Activated CD8-positive, alpha-beta T cell treated with anti-CD3 and anti-CD28 coated beads for 36 hours (primary cell): ENCODE measurements at regions of chr9 and their contacts with region 1.

Region 1: GRCh38 chr9:97993000-97993399 is 9.9 kb downstream of the ANP32B start:
- DNase-seq: no peak
- ATAC-seq: peak; percentile 66
- H3K4me3 Mint-ChIP-seq: peak overlapping the region; percentile 11
- H3K27ac Mint-ChIP-seq: peak overlapping the region; percentile 80
- H3K4me1 Mint-ChIP-seq: peaks cover 84% of the 10 kb centered on the region
- H3K27me3 Mint-ChIP-seq: no peaks in the 10 kb centered on the region
- CTCF ChIP-seq: no peak

Region 2: DNA sequence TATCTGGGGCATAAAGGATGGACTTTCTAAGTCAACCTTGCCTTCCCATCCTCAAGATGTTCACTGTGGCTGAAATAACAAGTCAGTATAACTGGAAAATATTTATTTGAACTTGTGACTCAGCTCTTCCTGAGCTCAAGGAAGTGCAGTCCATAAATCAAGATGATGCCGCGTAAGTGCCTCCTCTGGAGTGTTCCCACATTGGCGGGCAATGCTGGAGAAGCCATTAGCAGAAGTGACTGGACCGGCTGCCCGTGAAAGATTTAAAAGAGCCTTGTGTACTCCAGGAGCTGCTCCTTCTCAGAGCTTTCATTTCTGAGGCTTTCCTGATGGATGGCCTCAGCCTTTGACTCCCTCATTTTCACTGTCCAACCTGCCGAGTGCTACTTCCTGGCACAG is 474.1 kb before region 1 on chr9:
- CTCF ChIA-PET with region 1: no interaction called
- POLR2A ChIA-PET with region 1: no interaction called
- intact Hi-C with region 1: no loop called
- DNase-seq: no peak
- ATAC-seq: no peak
- H3K4me3 Mint-ChIP-seq: no peak overlapping the region
- H3K27ac Mint-ChIP-seq: no peak overlapping the region
- H3K4me1 Mint-ChIP-seq: no peaks in the 10 kb centered on the region
- H3K27me3 Mint-ChIP-seq: peaks cover 27% of the 10 kb centered on the region
- CTCF ChIP-seq: no peak

Region 3: DNA sequence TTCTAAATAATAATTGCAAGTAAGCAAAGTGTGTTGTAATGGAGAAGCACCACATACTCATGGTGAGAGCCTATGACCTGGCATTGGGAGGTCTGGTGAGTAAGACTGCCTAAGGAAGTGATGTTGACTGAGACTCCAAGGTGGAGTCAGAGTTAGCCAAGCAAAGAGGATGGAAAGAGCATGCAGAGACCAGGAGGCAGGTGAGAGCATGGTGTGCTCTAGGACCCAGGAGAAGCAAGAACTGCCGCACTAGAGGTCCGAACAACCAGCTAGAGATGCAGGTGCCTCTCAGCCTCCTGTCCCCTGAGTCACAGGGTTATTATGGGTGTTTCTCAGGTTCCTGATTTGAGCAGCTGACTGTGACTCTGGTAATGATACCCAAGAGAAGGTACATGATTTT is 17.4 kb after region 1 on chr9:
- CTCF ChIA-PET with region 1: interaction called, 11 read pairs
- POLR2A ChIA-PET with region 1: interaction called, 201 read pairs
- intact Hi-C with region 1: no loop called
- DNase-seq: peak; percentile 36
- ATAC-seq: peak; percentile 78
- H3K4me3 Mint-ChIP-seq: no peak overlapping the region
- H3K27ac Mint-ChIP-seq: peak overlapping the region; percentile 37
- H3K4me1 Mint-ChIP-seq: peaks cover 25% of the 10 kb centered on the region
- H3K27me3 Mint-ChIP-seq: no peaks in the 10 kb centered on the region
- CTCF ChIP-seq: no peak

Region 4: DNA sequence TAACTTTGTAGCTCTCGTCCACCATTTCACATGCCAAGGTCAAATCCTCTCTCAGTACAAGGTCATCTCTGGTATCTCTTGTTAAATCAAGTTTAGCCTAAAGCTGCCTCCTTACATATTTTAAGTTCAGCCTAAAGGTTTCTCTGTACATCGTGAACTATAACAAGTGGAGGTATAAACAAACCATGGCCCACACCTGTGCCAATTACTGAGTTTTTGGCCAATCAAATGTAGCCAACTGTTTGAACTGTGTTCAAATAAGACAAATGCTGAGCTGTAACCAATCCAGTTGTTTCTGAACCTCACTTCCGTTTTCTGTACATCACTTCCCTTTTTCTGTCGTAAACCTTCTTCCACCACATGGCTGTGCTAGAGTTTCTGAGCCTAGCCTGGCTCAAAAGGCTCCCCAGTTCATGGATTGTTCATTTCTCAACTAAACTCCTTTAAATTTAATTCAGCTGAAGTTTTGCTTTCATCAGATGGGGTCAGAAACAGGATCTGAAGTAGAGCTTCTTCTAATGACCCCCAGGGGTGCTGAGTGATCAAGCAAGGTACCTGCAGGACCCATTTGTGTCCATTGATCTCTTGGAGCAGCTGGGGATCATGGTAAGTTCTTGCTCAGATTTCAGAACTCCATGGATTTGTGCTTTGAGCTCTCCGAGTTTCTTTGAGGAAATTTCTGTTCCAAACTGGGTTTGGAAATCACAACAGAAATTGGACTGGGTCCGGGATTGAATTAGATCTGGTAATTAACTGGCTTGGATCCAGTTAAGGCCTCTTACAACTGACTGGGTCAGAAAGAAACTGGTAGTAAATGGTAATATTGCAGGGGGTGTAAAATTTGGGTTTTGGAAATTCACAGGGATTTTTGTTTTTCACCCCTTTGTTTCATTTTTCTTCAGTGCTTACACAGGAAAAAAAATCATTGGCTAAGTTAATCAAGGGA is 52.5 kb after region 1 on chr9:
- CTCF ChIA-PET with region 1: no interaction called
- POLR2A ChIA-PET with region 1: no interaction called
- intact Hi-C with region 1: no loop called
- DNase-seq: peak; percentile 52
- ATAC-seq: peak; percentile 93
- H3K4me3 Mint-ChIP-seq: peak overlapping the region; percentile 86
- H3K27ac Mint-ChIP-seq: peak overlapping the region; percentile 94
- H3K4me1 Mint-ChIP-seq: peaks cover 36% of the 10 kb centered on the region
- H3K27me3 Mint-ChIP-seq: no peaks in the 10 kb centered on the region
- CTCF ChIP-seq: peak; percentile 35

Region 5: GRCh38 chr9:98192503-98193335 is 199.7 kb after region 1 on chr9 and contains the start of gene CORO2A:
- CTCF ChIA-PET with region 1: no interaction called
- POLR2A ChIA-PET with region 1: no interaction called
- intact Hi-C with region 1: no loop called
- DNase-seq: peak; percentile 81
- ATAC-seq: peak; percentile 80
- H3K4me3 Mint-ChIP-seq: peak within 1 kb of the TSS; percentile 81
- H3K27ac Mint-ChIP-seq: peak within 1 kb of the TSS; percentile 49
- H3K4me1 Mint-ChIP-seq: peaks cover 32% of the 10 kb centered on the region
- H3K27me3 Mint-ChIP-seq: no peaks in the 10 kb centered on the region
- CTCF ChIP-seq: peak; percentile 25
- total RNA-seq, gene CORO2A: 12.2 to 13.4 TPM